Mucosa of descending colon (tissue), 3 donors: ENCODE measurements at regions of chr4 and their contacts with region 1.

Region 1: GRCh38 chr4:153573881-153574802 is 108.0 kb downstream of the TMEM131L start:
- DNase-seq: peak in 2 of 3 donors; percentile 73 to 87
- ATAC-seq: peak; percentile 84
- H3K4me3 ChIP-seq: no peak overlapping the region
- H3K4me1 ChIP-seq: no peaks in the 10 kb centered on the region
- CTCF ChIP-seq: peak; percentile 7

Region 2: DNA sequence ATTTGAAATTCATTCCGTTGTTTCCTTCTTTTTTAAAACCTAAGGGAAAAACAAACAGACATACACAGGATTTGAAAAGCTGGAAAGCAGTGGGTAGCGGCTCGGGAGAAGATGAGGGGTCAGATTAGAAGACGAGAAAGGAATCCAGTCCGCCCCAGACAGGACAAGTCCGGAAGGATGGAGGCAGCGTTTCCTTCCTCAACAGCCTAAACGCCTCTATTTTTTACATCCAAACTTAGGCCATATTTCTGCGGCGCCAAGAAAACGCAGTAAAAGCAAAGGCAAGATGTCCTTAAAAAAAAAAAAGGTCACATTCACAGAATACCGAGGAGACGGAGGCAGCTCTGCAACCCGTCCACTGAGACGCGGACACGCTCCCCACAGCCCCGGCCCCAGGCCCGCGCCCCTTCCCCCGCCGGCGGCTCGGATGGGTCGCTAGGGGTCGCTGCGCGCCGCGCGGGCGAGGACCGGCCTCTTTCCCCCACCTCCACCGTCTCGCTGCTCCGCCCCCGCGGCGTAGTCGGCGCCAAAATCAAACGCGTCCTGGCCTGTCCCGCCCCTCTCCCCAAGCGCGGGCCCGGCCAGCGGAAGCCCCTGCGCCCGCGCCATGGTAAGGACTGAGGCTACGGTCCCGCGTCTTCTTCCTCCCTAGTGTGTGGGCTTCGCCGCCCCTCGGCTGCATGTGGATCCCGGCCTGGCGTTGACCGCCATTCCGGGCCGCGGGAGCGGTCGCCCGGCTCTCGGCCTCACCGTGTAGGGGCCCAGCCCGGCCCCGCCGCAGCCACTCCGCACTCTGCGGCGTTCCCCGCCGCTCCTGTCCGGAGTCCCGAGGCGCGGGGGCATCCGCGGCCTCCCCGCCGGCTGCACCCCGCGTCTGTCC is 229.8 kb before region 1 on chr4 and contains the start of gene MND1:
- intact Hi-C with region 1: loop called (anchors 5 to 10 kb)
- DNase-seq: peak; percentile 89 to 91 (median 90)
- ATAC-seq: peak; percentile 93
- H3K4me3 ChIP-seq: peak within 1 kb of the TSS; percentile 54
- H3K4me1 ChIP-seq: peaks cover 3% of the 10 kb centered on the region
- CTCF ChIP-seq: peak; percentile 86
- total RNA-seq, gene MND1: 1.4 to 5.3 (median 1.6) TPM

Region 3: DNA sequence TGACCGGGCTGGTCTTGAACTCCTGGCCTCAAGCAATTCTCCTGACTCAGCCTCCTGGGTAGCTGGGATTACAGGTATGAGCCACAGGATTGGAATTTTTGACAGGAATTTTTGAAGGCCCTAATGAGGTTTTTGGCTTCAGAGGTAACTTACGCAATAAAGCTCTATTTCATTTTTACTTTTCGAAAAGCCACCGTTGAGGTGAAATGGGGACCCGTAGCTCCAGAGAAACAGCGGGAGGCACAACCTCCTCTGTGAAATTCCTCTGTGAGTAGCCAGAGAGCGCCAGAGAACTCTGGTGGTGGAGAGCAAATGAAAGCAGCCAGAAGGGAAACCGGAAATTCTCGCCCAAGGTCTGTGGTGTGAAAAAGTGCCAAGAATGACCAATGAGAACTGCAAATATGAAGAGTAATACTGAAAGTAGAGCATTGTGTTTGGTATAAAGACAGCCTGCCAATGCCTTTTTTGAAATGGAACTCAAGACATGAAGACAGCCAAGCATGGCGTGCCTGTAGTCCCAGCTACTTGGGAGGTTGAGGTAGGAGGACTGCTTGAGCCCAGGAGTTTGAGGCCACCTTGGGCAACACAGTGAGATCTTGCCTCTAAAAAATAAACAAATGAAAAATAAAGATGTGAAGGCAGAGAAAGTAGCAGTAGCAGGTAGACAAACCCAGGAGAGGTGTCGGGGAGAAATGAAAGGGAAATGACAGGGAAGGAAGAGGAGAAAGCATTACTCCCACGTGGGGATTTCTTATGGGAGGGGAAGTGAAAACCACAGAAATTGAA is 141.0 kb before region 1 on chr4:
- intact Hi-C with region 1: loop called (anchors 5 to 10 kb)
- DNase-seq: peak in 2 of 3 donors; percentile 56 to 80
- ATAC-seq: peak; percentile 97
- H3K4me3 ChIP-seq: no peak overlapping the region
- H3K4me1 ChIP-seq: no peaks in the 10 kb centered on the region
- CTCF ChIP-seq: peak; percentile 50